CD8-positive, alpha-beta T cell (primary cell): ENCODE measurements at regions of chr5 and their contacts with region 1.

Region 1: GRCh38 chr5:30385754-30386153 is 807.7 kb upstream of the CDH6 start:
- DNase-seq: no peak
- ATAC-seq: no peak
- H3K4me3 ChIP-seq: no peak overlapping the region
- H3K4me3 Mint-ChIP-seq: no peak overlapping the region
- H3K27ac ChIP-seq: no peak overlapping the region
- H3K27ac Mint-ChIP-seq: no peak overlapping the region
- H3K4me1 ChIP-seq: no peaks in the 10 kb centered on the region
- H3K4me1 Mint-ChIP-seq: no peaks in the 10 kb centered on the region
- H3K27me3 ChIP-seq: no peaks in the 10 kb centered on the region
- H3K27me3 Mint-ChIP-seq: no peaks in the 10 kb centered on the region
- CTCF ChIP-seq: no peak

Region 2: GRCh38 chr5:30343707-30344106 is 42.0 kb before region 1 on chr5:
- CTCF ChIA-PET with region 1: no interaction called
- POLR2A ChIA-PET with region 1: no interaction called
- intact Hi-C with region 1: loop called in 1 of 2 experiments (anchors 1 kb)
- DNase-seq: no peak
- ATAC-seq: no peak
- H3K4me3 ChIP-seq: no peak overlapping the region
- H3K4me3 Mint-ChIP-seq: no peak overlapping the region
- H3K27ac ChIP-seq: no peak overlapping the region
- H3K27ac Mint-ChIP-seq: no peak overlapping the region
- H3K4me1 ChIP-seq: no peaks in the 10 kb centered on the region
- H3K4me1 Mint-ChIP-seq: no peaks in the 10 kb centered on the region
- H3K27me3 ChIP-seq: no peaks in the 10 kb centered on the region
- H3K27me3 Mint-ChIP-seq: no peaks in the 10 kb centered on the region
- CTCF ChIP-seq: no peak